ENCODE measurements at regions of chr2 and their contacts with region 1.

Region 1: GRCh38 chr2:133602530-133602929 is 34.3 kb upstream of the NCKAP5 start:
- DNase-seq: peak in 1 of 10 donors; percentile 73

Region 2: DNA sequence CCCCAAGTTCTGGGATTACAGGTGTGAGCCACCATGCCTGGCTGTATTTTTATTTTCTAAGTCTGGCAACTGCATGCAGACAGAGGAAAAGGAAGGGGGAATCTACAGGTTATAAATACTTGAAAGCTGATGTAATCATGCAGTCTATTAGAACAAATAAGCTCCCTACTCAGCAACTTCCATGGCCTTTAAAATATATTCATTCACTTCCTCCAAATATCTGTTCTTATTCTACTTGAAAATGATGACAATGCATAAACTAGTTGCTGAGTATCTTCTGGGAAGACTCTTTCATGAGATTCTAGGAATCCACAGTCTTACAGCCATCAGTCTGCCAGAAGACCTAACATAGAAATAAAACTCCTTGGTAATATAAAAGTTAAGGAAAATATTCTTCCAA is 32.6 kb after region 1 on chr2:
- intact Hi-C with region 1: loop called (anchors 5 kb)
- DNase-seq: no peak

Measured in posterior cingulate gyrus (tissue), 11 donors.